ENCODE measurements at regions of chr14 and their contacts with region 1.

Region 1: DNA sequence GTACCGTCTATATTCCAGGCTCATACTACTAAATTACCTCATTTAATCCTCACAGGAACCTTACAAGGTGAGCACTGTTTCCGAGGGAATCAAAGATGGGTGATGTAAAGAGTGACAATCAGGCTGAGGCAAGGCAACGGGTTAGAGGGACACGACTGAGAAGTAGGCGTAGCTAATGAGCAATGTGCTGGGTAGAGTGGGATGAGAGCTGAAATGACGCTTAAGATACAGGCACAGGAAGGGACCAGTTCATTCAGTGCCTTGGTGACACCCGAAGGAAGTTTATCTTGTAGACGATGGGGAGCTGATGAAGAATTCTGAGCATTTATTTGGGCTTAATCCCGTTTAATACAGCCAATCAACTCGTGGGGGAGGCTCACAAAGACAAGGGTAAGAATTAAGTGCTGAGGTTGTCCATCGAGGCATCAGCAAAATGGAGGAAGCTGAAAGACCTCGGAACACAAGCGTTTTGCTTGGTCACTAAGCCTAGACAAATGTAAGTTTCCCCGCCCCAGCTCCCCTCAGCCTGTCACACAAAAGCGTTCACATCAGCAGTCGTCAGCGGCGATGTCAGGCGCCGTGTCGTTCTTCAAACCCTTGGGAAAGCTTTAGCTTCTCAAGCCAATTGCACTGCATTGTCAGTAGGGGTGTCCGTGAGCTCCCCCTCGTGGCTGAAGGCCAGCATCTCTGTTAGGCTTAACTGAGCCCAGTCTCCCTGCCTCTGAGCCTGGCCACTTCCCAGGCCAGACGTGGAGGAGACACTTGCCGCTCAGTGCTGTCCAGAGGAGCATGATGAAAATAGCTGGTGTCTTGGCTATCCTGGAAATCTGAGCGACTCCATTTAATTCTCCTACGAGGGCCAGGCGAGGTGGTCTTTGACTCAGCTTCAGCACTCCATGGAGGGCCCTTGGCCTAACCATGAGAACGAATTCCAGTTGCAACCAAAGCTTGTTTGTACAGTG is 288.5 kb upstream of the G2E3 start:
- DNase-seq: peak; percentile 81
- ATAC-seq: peak; percentile 99
- H3K4me3 ChIP-seq: peak overlapping the region; percentile 41
- H3K27ac ChIP-seq: no peak overlapping the region
- H3K4me1 ChIP-seq: peaks cover 3% of the 10 kb centered on the region; the same call in 1 of the 2 replicates
- H3K27me3 ChIP-seq: no peaks in the 10 kb centered on the region
- CTCF ChIP-seq: peak; percentile 81
- POLR2A ChIP-seq: no peak
- RAD21 ChIP-seq: peak; percentile 66

Region 2: GRCh38 chr14:29548948-29549370 is 721.5 kb before region 1 on chr14:
- CTCF ChIA-PET with region 1: interaction called, 4 read pairs
- POLR2A ChIA-PET with region 1: no interaction called
- dilution Hi-C with region 1: no loop called
- in situ Hi-C with region 1: no loop called
- intact Hi-C with region 1: loop called (anchors 5 kb)
- DNase-seq: peak; percentile 77
- ATAC-seq: peak; percentile 89
- H3K4me3 ChIP-seq: no peak overlapping the region
- H3K27ac ChIP-seq: no peak overlapping the region
- H3K4me1 ChIP-seq: no peaks in the 10 kb centered on the region
- H3K27me3 ChIP-seq: 0 out of 2 replicates have a peak, but pooled peaks cover 2% of the 10 kb centered on the region
- CTCF ChIP-seq: peak; percentile 67
- POLR2A ChIP-seq: no peak
- RAD21 ChIP-seq: peak; percentile 73

Region 3: DNA sequence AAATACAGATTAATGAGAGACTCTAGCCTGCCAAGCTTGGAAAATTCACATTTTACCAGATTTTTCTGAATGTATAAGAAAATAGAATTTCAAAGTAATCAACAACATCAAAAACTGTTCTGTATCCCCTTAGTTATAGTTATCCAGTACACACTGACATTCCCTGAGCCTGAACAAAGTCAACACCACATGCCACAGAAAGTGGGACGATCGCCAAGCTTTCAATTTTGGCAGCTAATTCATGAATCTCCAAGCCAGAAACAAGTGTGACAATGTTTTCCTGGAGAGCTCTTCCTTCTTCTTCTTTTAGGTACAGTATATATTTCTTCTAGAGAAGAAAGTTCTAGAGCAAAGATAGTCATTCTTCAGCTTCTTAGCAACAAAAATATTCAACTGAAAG is 633.1 kb before region 1 on chr14:
- CTCF ChIA-PET with region 1: no interaction called
- POLR2A ChIA-PET with region 1: no interaction called
- dilution Hi-C with region 1: no loop called
- in situ Hi-C with region 1: no loop called
- intact Hi-C with region 1: no loop called
- DNase-seq: peak; percentile 64
- ATAC-seq: peak; percentile 68
- H3K4me3 ChIP-seq: no peak overlapping the region
- H3K27ac ChIP-seq: no peak overlapping the region
- H3K4me1 ChIP-seq: no peaks in the 10 kb centered on the region
- H3K27me3 ChIP-seq: no peaks in the 10 kb centered on the region
- CTCF ChIP-seq: no peak
- POLR2A ChIP-seq: no peak
- RAD21 ChIP-seq: no peak

Region 4: DNA sequence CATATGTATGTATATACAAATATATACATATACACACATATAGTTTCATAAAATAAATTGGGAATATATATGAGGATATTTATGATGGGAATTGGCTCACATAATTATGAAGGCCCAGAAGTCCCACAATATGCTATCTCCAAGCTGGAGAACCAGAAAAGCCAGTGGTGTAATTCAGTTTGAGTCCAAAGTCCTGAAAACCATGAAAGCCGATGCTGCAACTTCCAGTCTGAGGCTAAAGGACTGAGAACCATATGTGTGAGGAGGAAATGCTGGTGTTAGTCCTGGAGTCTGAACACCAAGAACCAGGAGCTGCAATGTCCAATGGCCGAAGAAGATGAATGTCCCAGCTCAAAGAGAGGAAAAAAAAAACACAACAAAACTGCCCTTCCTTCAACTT is 277.3 kb before region 1 on chr14:
- CTCF ChIA-PET with region 1: no interaction called
- POLR2A ChIA-PET with region 1: no interaction called
- dilution Hi-C with region 1: no loop called
- in situ Hi-C with region 1: no loop called
- intact Hi-C with region 1: no loop called
- DNase-seq: no peak
- ATAC-seq: no peak
- H3K4me3 ChIP-seq: no peak overlapping the region
- H3K27ac ChIP-seq: no peak overlapping the region
- H3K4me1 ChIP-seq: no peaks in the 10 kb centered on the region
- H3K27me3 ChIP-seq: no peaks in the 10 kb centered on the region
- CTCF ChIP-seq: no peak
- POLR2A ChIP-seq: no peak
- RAD21 ChIP-seq: no peak

Region 5: GRCh38 chr14:30223385-30223813 is 47.1 kb before region 1 on chr14:
- CTCF ChIA-PET with region 1: interaction called, 15 read pairs
- POLR2A ChIA-PET with region 1: no interaction called
- dilution Hi-C with region 1: no loop called
- in situ Hi-C with region 1: no loop called
- intact Hi-C with region 1: loop called (anchors 2 kb)
- DNase-seq: peak; percentile 95
- ATAC-seq: peak; percentile 85
- H3K4me3 ChIP-seq: no peak overlapping the region
- H3K27ac ChIP-seq: no peak overlapping the region
- H3K4me1 ChIP-seq: peaks cover 16% of the 10 kb centered on the region
- H3K27me3 ChIP-seq: no peaks in the 10 kb centered on the region
- CTCF ChIP-seq: no peak
- POLR2A ChIP-seq: no peak
- RAD21 ChIP-seq: no peak

Region 6: DNA sequence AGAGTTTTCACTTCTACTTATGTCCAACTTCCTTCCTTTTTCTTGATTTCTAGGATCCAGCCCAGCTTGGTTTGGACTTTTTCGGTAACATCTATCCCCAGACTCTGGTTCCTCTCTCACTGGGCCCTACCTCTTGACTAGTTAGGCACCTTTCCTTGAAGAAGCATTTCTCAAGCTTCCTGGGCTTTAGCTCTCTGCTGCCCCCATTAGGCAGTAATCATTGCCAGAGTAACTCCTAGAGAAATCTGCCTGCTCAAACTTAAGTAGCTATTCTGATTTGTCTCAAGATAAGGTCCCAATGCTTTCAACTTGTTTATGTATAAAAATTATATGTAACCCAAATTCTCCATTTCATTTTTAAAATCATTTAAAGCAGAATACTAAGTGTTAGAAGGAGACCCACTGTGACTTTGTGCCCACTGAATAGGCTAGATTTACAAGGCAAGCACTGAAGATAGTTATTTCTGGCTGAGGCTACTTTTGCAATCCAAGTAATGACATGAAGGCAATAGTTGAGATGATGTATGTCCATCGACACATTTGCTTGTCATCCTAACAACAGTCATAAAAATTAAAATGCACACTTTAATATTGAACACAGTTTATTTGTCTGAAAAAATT is 13.5 kb after region 1 on chr14:
- CTCF ChIA-PET with region 1: interaction called, 44 read pairs
- POLR2A ChIA-PET with region 1: no interaction called
- dilution Hi-C with region 1: no loop called
- in situ Hi-C with region 1: no loop called
- intact Hi-C with region 1: no loop called
- DNase-seq: peak; percentile 53
- ATAC-seq: peak; percentile 69
- H3K4me3 ChIP-seq: no peak overlapping the region
- H3K27ac ChIP-seq: no peak overlapping the region
- H3K4me1 ChIP-seq: no peaks in the 10 kb centered on the region; the same call in 1 of the 2 replicates
- H3K27me3 ChIP-seq: no peaks in the 10 kb centered on the region; the same call in 1 of the 2 replicates
- CTCF ChIP-seq: peak; percentile 69
- POLR2A ChIP-seq: no peak
- RAD21 ChIP-seq: peak; percentile 55

Measured in IMR-90 (cell line).